Calu3 (cell line): ENCODE measurements at regions of chr22 and their contacts with region 1.

Region 1: DNA sequence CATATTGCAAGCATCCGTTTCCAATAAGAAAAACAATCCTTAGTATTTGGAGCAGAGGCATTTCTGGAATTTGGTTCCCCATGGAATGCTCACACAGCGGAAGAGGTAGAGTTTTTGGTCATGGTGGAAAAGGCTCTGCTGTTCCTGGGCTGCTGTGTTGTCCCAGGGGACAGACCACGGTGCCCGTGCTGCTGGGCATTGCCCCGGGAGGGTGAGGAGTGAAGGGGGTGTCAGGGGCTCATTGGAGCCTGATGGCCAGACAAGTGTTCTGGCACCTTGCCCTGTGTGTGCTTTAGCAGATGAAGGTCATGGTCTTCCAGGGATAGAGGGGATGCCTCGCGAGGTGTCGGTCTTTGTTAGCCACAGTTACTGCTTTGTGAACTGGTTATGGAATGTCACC is 61.2 kb downstream of the MPPED1 start:
- DNase-seq: no peak
- H3K4me3 Mint-ChIP-seq: no peak overlapping the region
- H3K27ac Mint-ChIP-seq: no peak overlapping the region
- H3K4me1 Mint-ChIP-seq: no peaks in the 10 kb centered on the region
- H3K27me3 Mint-ChIP-seq: peaks cover 37% of the 10 kb centered on the region
- CTCF ChIP-seq: no peak

Region 2: DNA sequence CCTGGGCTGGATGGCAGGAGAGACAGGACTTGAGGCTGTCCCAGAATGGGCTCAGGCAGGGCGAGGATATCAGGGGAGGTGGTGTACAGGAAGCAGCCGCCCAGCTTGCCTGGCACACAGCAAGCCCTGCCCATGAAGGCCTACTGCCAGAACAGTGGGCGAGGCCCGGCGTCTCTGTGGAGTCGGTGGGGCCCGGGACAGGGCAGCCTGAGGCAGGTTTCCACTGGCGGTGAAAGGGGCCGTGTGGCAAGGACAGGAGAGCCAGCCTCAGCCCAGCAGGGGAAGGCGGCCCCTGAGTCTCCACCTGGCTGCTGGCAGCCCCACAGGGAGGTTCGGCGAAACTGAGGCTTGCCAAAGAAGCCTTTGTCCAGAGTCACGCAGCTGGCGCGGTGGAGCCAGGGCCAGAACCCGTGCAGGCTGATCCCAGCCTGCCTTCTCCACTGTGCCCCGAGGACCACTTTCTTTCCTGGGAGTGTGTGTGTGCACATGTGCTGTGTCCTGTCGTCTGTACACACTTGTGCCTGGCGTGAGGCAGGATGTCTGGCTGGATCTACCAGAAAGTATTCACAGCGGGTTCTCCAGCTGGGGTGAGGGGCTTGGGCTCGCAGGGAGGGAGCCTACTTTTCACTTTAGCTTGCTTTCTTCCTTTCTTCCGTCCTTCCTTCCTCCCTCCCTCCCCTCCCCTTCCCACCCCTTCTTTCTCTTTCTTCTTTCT is 320.5 kb before region 1 on chr22:
- CTCF ChIA-PET with region 1: interaction called, 14 read pairs
- intact Hi-C with region 1: no loop called
- DNase-seq: peak; percentile 70
- H3K4me3 Mint-ChIP-seq: peak overlapping the region; percentile 69
- H3K27ac Mint-ChIP-seq: peak overlapping the region; percentile 43
- H3K4me1 Mint-ChIP-seq: peaks cover 8% of the 10 kb centered on the region
- H3K27me3 Mint-ChIP-seq: no peaks in the 10 kb centered on the region
- CTCF ChIP-seq: no peak